ENCODE measurements at regions of chr15 and their contacts with region 1.

Region 1: DNA sequence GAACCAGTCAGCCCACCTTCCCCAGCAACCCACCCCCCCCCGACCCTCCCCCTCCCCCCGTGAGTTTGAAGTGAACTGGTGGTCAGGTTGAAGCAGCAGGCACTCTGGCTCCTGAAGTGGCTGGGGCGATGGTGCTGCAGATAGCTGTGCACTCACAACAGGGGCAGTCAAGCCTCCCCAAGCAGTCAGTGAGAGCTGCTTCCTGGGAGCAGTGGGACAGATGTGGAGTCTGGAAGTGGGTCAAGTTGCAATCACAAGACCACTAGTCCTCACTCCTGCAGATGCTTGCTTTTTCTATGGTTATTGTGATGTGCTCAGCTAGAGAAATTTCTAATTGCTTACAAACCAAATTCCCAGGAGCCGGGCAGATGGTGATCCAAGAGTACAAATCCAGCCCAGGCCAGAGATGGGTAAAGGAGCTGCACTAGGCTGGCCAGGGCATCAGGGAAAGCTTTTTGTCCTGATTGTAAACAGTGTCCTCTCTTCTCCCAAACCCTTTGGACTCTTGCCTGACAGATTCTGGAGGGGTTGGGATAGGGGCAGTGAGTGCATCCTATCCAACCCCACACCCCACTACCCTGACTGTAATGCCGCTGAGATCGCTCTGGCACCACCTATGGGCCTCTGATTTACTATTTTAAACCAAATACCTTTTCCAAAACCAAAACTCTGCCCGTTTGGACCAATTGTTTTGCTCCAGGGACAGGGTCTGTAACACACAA is 9.8 kb upstream of the CLPX start:
- DNase-seq: no peak
- ATAC-seq: peak; percentile 70

Region 2: DNA sequence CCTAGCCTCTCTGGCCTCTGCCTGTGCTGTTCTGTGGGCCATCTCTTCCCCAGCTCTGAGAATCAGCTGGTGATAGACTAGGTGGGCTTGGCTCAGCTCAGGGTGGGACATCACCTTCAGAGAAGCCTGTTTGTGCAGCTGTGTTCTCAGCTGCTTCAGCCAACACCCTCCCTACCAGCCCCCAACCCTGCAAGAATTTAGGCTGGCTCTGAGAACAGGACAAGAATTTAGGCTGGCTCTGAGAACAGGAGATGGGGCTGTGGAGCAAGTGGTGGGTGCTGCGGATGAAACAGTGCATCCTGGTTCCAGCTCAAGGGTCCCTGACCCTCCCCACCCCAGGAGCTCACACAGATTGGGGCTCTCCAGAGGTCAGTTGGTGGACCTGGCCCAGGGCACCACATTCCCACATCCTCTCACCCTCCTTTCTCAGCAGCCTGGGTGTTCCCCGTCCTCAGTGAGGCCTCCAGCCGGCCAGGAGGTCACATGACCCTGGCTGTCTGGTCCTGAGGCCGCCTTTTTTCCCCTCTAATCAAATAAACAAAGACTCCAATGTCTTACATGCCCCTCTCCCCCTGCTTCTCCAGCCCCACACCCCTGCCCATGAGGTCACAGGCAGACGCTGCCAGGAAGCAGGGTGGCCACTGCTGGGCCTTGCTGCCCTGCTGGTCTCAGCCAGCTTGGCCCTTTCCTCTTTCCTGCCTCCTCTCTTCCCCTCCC is 338.4 kb before region 1 on chr15:
- intact Hi-C with region 1: no loop called
- DNase-seq: peak; percentile 81
- ATAC-seq: peak; percentile 77

Region 3: GRCh38 chr15:65217526-65218482 is 22.8 kb after region 1 on chr15:
- intact Hi-C with region 1: no loop called
- DNase-seq: no peak
- ATAC-seq: no peak

Region 4: GRCh38 chr15:65231306-65231705 is 36.3 kb after region 1 on chr15:
- intact Hi-C with region 1: loop called (anchors 5 kb)
- DNase-seq: no peak
- ATAC-seq: no peak